ENCODE measurements at regions of chr16 and their contacts with region 1.

Region 1: GRCh38 chr16:89972244-89973234 is 24.0 kb downstream of the DEF8 start:
- DNase-seq: peak; percentile 75 to 94
- H3K4me3 ChIP-seq: peak overlapping the region; percentile 98
- H3K27ac ChIP-seq: peak overlapping the region; percentile 74
- H3K4me1 ChIP-seq: peaks cover 22% of the 10 kb centered on the region
- H3K27me3 ChIP-seq: no peaks in the 10 kb centered on the region
- CTCF ChIP-seq: no peak

Region 2: GRCh38 chr16:89409161-89409711 is 563.3 kb before region 1 on chr16:
- CTCF ChIA-PET with region 1: no interaction called
- POLR2A ChIA-PET with region 1: no interaction called
- intact Hi-C with region 1: no loop called
- DNase-seq: no peak
- H3K4me3 ChIP-seq: no peak overlapping the region
- H3K27ac ChIP-seq: no peak overlapping the region
- H3K4me1 ChIP-seq: no peaks in the 10 kb centered on the region
- H3K27me3 ChIP-seq: no peaks in the 10 kb centered on the region
- CTCF ChIP-seq: no peak

Region 3: DNA sequence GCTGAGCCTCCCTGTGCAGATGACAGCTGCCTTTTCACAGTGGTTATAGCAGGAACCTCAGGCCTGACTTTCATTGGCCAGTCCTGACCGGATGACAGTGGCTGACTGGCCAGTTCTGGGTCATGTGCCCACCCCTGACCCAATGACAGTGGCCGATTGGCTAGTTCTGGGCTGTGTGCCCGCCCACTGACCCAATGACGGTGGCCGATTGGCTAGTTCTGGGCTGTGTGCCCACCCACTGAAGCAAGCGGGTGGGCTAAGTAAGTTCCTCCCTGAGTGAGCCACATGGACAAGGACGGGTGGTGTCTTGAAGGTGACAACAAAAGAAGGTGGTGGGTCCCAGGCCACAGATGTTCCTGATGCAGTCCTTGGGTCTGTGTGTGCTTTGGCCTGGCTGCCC is 14.5 kb before region 1 on chr16:
- CTCF ChIA-PET with region 1: no interaction called
- POLR2A ChIA-PET with region 1: no interaction called
- intact Hi-C with region 1: no loop called
- DNase-seq: no peak
- H3K4me3 ChIP-seq: no peak overlapping the region
- H3K27ac ChIP-seq: no peak overlapping the region
- H3K4me1 ChIP-seq: no peaks in the 10 kb centered on the region
- H3K27me3 ChIP-seq: no peaks in the 10 kb centered on the region
- CTCF ChIP-seq: no peak

Region 4: GRCh38 chr16:90001761-90002503 is 29.4 kb after region 1 on chr16:
- CTCF ChIA-PET with region 1: no interaction called
- POLR2A ChIA-PET with region 1: interaction called, 22 read pairs
- intact Hi-C with region 1: no loop called
- DNase-seq: no peak
- H3K4me3 ChIP-seq: no peak overlapping the region
- H3K27ac ChIP-seq: no peak overlapping the region
- H3K4me1 ChIP-seq: no peaks in the 10 kb centered on the region
- H3K27me3 ChIP-seq: no peaks in the 10 kb centered on the region
- CTCF ChIP-seq: no peak

Measured in PC-9 (cell line).